Panc1 (cell line): ENCODE measurements at regions of chr13 and their contacts with region 1.

Region 1: DNA sequence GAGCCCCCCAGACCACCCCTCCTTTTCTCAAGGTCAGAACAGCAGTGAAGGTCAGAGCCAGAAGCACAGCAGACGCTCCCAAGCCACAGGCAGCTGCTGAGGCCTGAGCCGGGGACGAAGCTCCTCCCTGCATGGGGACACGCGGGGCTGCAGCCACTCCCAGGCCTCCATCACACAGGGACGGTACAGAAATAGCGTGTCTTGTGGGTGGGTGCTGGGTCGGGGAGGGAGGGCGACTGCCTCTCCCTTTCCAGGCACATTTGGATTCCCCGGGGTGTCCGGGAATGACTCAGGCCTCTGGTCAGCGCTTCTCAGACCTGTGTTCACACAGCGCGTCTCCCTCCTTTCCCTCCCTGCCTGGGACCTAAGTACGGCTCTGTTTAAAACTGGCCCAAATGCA is 33.2 kb downstream of the RASA3 start:
- DNase-seq: no peak
- ATAC-seq: peak; percentile 60
- H3K4me3 ChIP-seq: no peak overlapping the region
- H3K27ac ChIP-seq: peak overlapping the region; percentile 85
- H3K4me1 ChIP-seq: peaks cover 49% of the 10 kb centered on the region
- H3K27me3 ChIP-seq: no peaks in the 10 kb centered on the region
- CTCF ChIP-seq: no peak

Region 2: GRCh38 chr13:113744197-113745000 is 354.8 kb before region 1 on chr13:
- CTCF ChIA-PET with region 1: no interaction called
- POLR2A ChIA-PET with region 1: no interaction called
- in situ Hi-C with region 1: no loop called
- intact Hi-C with region 1: no loop called
- DNase-seq: no peak
- ATAC-seq: no peak
- H3K4me3 ChIP-seq: no peak overlapping the region
- H3K27ac ChIP-seq: no peak overlapping the region
- H3K4me1 ChIP-seq: no peaks in the 10 kb centered on the region
- H3K27me3 ChIP-seq: no peaks in the 10 kb centered on the region
- CTCF ChIP-seq: no peak

Region 3: GRCh38 chr13:114043421-114044053 is 55.7 kb before region 1 on chr13:
- CTCF ChIA-PET with region 1: no interaction called
- POLR2A ChIA-PET with region 1: interaction called, 4 read pairs
- in situ Hi-C with region 1: no loop called
- intact Hi-C with region 1: loop called (anchors 10 kb)
- DNase-seq: no peak
- ATAC-seq: peak; percentile 81
- H3K4me3 ChIP-seq: peak overlapping the region in 1 of 2 experiments; percentile 11; a peak in 1 of 4 replicates
- H3K27ac ChIP-seq: peak overlapping the region; percentile 31
- H3K4me1 ChIP-seq: peaks cover 34% of the 10 kb centered on the region
- H3K27me3 ChIP-seq: no peaks in the 10 kb centered on the region
- CTCF ChIP-seq: no peak; the same call in 1 of the 2 replicates

Region 4: GRCh38 chr13:114065141-114065925 is 33.9 kb before region 1 on chr13:
- CTCF ChIA-PET with region 1: interaction called, 3 read pairs
- POLR2A ChIA-PET with region 1: interaction called, 3 read pairs
- in situ Hi-C with region 1: no loop called
- intact Hi-C with region 1: loop called (anchors 5 kb)
- DNase-seq: peak; percentile 75
- ATAC-seq: peak; percentile 88
- H3K4me3 ChIP-seq: peak overlapping the region; percentile 31 to 45
- H3K27ac ChIP-seq: peak overlapping the region; percentile 98
- H3K4me1 ChIP-seq: peaks cover 57% of the 10 kb centered on the region
- H3K27me3 ChIP-seq: no peaks in the 10 kb centered on the region
- CTCF ChIP-seq: no peak

Region 5: GRCh38 chr13:114087430-114087829 is 11.8 kb before region 1 on chr13:
- CTCF ChIA-PET with region 1: no interaction called
- POLR2A ChIA-PET with region 1: no interaction called
- in situ Hi-C with region 1: no loop called
- intact Hi-C with region 1: no loop called
- DNase-seq: no peak
- ATAC-seq: no peak
- H3K4me3 ChIP-seq: no peak overlapping the region
- H3K27ac ChIP-seq: no peak overlapping the region
- H3K4me1 ChIP-seq: no peaks in the 10 kb centered on the region
- H3K27me3 ChIP-seq: no peaks in the 10 kb centered on the region
- CTCF ChIP-seq: no peak